ENCODE measurements at regions of chr17 and their contacts with region 1.

Region 1: DNA sequence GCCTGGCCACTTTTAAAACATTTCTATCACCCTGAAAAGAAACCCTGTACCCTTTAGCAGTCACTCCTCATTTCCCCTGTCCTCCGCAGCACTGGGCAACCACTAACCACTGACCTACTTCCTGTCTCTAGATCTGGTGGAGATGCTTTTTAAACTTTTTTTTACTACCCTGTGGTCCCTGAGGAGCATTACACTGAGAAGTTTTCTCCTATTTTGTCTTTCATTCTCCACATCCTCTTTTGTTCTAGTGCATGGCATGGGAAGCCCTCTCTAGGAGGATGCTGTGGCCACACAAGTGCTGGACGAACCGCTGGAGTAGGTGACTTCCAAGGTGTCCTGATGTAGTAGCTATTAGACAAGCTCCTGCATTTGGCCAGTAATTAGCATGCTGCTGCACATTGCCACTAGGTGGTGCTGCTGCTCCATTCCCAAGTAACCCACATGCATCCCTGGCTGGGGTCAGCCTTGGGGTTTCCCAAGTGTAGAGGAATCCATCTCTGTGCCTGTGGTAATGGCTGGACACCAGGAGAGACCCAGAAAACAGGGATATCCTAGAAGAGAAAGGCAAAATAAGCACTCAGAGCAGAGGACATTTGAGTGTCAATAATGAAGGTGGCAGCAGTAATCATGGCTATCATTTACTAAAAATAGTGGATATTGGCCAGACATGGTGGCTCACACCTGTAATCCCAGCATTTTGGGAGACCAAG is 143.8 kb upstream of the CRHR1 start:
- DNase-seq: peak; percentile 68 to 88
- ATAC-seq: peak; percentile 87 to 93 (median 87)
- H3K4me3 ChIP-seq: no peak overlapping the region
- H3K4me3 Mint-ChIP-seq: peak overlapping the region; percentile 79
- H3K27ac ChIP-seq: peak overlapping the region; percentile 22
- H3K27ac Mint-ChIP-seq: peak overlapping the region; percentile 67 to 83
- H3K4me1 ChIP-seq: peaks cover 14% of the 10 kb centered on the region
- H3K4me1 Mint-ChIP-seq: peaks cover 10 to 11% of the 10 kb centered on the region in 2 donors
- H3K27me3 ChIP-seq: no peaks in the 10 kb centered on the region
- H3K27me3 Mint-ChIP-seq: peaks cover 3% of the 10 kb centered on the region in 2 donors
- CTCF ChIP-seq: peak; percentile 98

Region 2: GRCh38 chr17:45828628-45829027 is 188.3 kb after region 1 on chr17:
- intact Hi-C with region 1: loop called (anchors 1 kb)
- DNase-seq: no peak
- ATAC-seq: no peak
- H3K4me3 ChIP-seq: no peak overlapping the region
- H3K4me3 Mint-ChIP-seq: no peak overlapping the region
- H3K27ac ChIP-seq: no peak overlapping the region
- H3K27ac Mint-ChIP-seq: no peak overlapping the region
- H3K4me1 ChIP-seq: no peaks in the 10 kb centered on the region
- H3K4me1 Mint-ChIP-seq: no peaks in the 10 kb centered on the region
- H3K27me3 ChIP-seq: no peaks in the 10 kb centered on the region
- H3K27me3 Mint-ChIP-seq: peaks cover 0 to 3% of the 10 kb centered on the region in 2 donors
- CTCF ChIP-seq: no peak